ENCODE measurements at regions of chr16 and their contacts with region 1.

Region 1: DNA sequence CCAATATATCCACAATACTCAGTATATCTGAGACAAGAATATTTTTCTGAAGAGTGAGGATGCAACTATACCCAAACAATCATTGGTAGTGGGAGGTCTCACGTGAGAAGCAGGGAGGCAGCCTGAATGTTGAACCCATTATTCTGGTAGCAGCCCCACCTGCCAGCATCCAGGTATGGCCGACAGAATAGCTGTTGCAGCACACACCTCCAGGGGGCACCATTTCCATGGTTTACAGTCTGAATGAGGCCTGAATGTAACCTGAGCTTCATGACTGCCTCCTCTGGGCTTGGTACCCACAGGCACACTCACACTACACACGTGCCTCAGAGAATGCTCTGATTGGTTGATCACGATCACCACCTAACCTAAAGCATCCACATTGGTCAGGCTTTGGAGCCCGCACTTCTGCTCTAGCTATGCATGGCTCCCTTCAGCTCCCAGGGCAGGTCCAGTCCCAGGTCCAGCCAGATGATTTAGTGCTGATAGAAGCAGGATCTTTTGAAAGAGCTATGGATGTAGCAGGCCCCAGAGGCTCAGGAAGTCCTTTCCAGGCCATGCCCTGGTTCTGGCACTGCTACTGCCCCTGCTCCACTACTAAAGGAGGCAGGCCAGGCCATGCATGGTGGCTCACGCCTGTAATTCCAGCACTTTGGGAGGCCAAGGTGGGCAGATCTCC is 11.0 kb upstream of the CBFB start:
- DNase-seq: peak; percentile 72
- H3K4me3 ChIP-seq: no peak overlapping the region
- CTCF ChIP-seq: peak; percentile 81

Region 2: DNA sequence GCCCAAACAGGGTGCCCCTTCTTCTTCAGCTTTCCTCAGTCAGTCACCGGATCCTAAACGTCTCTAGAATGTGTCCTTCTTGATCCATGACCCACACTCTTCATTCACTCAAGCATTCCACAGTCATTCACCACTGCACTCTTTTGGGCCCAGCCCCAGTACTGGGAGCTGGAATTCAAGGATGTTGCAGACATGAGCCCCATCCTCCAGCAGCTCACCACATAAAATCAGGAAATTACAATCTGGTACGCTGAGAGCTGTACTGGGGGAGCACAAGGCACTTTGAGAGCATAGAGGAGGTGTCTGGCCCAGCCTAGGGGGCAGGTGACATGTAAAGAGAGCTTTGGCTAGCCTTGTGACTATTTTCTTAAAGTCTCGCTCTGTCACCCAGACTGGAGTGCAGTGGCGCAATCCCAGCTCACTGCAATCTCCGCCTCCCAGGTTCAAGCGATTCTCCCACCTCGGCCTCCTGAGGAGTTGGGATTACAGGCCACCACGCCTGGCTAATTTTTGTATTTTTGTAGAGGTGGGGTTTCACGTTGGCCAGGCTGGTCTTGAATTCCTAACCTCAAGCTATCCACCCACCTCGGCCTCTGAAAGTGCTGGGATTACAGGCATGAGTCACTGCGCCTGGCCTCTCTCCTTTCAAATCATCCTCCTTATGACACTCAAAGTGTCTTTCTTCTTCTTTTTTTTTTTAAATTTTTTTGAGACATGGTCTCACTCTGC is 10.9 kb before region 1 on chr16:
- CTCF ChIA-PET with region 1: interaction called, 42 read pairs
- POLR2A ChIA-PET with region 1: no interaction called
- DNase-seq: no peak
- H3K4me3 ChIP-seq: no peak overlapping the region
- CTCF ChIP-seq: no peak

Region 3: GRCh38 chr16:67093098-67093726 is 75.3 kb after region 1 on chr16:
- CTCF ChIA-PET with region 1: interaction called, 19 read pairs
- POLR2A ChIA-PET with region 1: no interaction called
- DNase-seq: no peak
- H3K4me3 ChIP-seq: no peak overlapping the region
- CTCF ChIP-seq: no peak

Region 4: DNA sequence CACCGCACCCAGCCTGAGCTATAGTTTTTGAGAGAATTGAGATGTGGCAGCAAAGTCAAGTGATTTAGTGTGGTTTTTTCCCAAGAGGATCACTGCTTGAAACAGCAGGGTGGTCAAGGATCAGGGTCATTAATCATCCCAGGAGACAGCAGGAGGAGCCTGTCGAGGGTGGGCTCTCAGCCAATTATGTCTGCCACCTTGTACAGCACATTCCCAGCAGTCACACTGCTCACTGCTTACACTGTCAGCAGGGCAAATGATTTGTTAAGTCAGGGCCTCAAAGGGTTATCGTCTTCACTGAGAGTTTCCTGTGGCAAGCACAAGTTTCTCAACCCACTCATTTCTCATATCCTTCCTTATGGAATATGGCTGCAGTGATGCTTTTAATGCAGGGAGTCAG is 119.7 kb after region 1 on chr16:
- CTCF ChIA-PET with region 1: interaction called, 10 read pairs
- POLR2A ChIA-PET with region 1: no interaction called
- DNase-seq: no peak
- H3K4me3 ChIP-seq: no peak overlapping the region
- CTCF ChIP-seq: no peak

Region 5: GRCh38 chr16:67183627-67184328 is 165.8 kb after region 1 on chr16 and contains the start of gene MATCAP1:
- CTCF ChIA-PET with region 1: interaction called, 38 read pairs
- POLR2A ChIA-PET with region 1: no interaction called
- DNase-seq: peak; percentile 82
- H3K4me3 ChIP-seq: peak within 1 kb of the TSS; percentile 74
- CTCF ChIP-seq: no peak

Region 6: DNA sequence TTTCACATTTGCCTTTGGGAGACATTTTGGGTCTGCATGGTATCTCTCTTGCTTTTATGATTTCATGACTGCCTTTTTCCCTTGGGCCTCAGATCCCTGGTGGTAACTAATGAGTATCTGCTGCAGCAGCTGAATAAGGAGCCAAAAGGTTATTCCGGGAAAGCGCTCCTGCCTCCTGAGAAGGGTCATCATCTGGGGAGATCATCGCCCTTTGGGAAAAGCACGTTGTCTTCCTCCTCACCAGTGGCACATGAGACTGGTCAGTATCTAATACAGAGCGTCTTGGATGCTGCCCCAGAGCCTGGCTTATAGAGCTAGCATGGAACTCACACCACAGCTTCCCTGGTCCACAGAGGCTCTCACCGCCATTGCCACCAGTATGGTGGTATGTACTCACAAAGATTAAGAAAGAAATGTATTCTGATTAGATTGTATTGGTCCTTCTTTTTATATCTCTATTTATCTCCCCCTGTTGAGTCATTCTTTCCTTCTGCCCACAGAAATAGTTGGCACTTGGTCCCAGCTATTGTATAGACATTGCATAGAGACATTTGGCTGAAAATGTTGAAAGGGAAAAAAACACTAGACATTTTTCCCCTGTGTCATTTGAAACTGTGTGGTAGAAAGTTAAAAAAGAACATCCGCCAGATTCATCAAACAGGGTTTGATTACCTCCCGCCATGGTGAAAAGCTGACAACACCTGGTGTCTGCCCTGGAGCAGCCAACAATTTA is 367.0 kb after region 1 on chr16:
- CTCF ChIA-PET with region 1: no interaction called
- POLR2A ChIA-PET with region 1: no interaction called
- DNase-seq: no peak
- H3K4me3 ChIP-seq: no peak overlapping the region
- CTCF ChIP-seq: no peak

Measured in AG04449 (cell line).